Prostate gland (tissue), 2 donors: ENCODE measurements at regions of chr15 and their contacts with region 1.

Region 1: GRCh38 chr15:48800811-48801455 is 9.9 kb downstream of the CEP152 start:
- DNase-seq: no peak
- H3K4me3 ChIP-seq: no peak overlapping the region
- H3K27ac ChIP-seq: no peak overlapping the region
- H3K4me1 ChIP-seq: no peaks in the 10 kb centered on the region
- H3K27me3 ChIP-seq: no peaks in the 10 kb centered on the region
- CTCF ChIP-seq: peak in 3 of 4 experiments; percentile 40 to 47 (median 43)
- POLR2A ChIP-seq: no peak

Region 2: GRCh38 chr15:48352474-48353072 is 448.4 kb before region 1 on chr15:
- intact Hi-C with region 1: loop called (anchors 10 kb)
- DNase-seq: peak; percentile 64
- H3K4me3 ChIP-seq: no peak overlapping the region
- H3K27ac ChIP-seq: no peak overlapping the region
- H3K4me1 ChIP-seq: no peaks in the 10 kb centered on the region
- H3K27me3 ChIP-seq: no peaks in the 10 kb centered on the region
- CTCF ChIP-seq: peak; percentile 33 to 67 (median 64)
- POLR2A ChIP-seq: no peak

Region 3: DNA sequence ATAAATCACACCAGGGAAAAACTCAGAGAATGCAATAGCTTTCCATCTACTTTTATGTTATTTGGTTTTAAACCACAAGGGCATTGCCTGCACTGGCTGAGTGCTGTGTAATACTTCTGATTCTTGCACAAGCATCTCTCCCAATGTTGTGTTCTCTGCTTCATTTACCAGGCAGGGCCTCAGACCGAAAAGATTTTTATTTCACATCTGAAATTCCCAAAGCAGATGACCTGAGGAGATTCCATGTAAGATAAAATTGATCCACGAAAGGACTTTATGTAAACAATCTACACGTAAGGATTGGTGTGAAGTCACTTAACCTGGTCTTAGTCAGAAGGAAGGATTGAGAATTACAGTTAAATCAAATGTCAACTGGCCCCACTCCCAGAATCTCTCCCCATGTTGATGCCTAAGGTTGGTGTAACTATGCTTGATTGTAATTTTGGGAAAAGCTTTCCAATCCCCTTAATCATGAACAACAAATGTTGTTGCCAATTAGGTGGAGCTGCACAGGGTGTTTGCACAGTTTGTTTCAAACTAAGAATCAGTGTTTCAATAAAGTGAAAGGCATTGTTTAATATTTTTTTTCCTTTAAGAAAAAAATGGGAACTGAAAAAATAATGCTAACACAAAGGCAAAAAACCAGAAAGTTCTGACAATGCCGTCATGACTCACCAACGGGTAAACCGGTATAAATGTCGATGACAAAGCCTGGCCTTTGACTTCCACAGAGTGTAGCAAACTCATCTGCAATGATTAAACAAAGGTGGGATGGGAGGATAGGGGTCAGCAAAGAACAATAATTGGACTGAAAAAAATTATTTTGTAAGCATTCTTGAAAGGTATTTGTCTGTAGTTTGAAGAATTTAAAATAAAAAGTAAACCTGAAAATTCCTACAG is 341.1 kb before region 1 on chr15:
- intact Hi-C with region 1: loop called (anchors 10 kb)
- DNase-seq: no peak
- H3K4me3 ChIP-seq: no peak overlapping the region
- H3K27ac ChIP-seq: no peak overlapping the region
- H3K4me1 ChIP-seq: no peaks in the 10 kb centered on the region
- H3K27me3 ChIP-seq: no peaks in the 10 kb centered on the region
- CTCF ChIP-seq: no peak
- POLR2A ChIP-seq: no peak

Region 4: DNA sequence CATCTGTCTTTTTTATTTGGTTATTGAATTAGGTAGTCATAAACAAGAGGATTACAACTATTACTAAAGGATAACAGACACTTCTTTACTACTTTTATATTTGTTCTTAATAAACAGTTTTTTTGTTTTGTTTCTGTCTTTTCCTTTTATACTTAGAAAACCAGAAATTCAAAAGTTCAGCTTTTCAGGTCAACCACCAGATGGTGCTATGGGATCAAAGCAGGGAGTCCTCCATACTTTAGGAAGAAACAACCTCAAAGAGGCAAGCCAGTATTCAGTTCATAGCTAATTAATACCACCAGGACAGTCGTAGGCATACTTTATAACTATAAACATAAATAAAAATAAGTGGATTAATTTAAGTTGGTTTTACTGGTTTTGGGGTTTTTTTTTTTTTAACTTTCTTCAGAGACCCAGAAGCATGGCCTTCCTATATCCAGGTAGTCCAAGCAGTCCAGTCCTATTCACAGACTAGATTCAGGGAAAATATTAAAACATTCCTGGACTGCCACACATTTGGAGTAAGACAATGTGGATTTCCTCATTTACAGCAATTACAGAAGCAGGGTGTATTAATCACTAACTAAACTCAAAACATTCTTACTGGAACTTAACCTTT is 61.0 kb after region 1 on chr15:
- intact Hi-C with region 1: no loop called
- DNase-seq: no peak
- H3K4me3 ChIP-seq: no peak overlapping the region
- H3K27ac ChIP-seq: no peak overlapping the region
- H3K4me1 ChIP-seq: no peaks in the 10 kb centered on the region
- H3K27me3 ChIP-seq: no peaks in the 10 kb centered on the region
- CTCF ChIP-seq: peak; percentile 75 to 86 (median 82)
- POLR2A ChIP-seq: no peak